K562 (cell line): ENCODE measurements at regions of chr6 and their contacts with region 1.

Region 1: DNA sequence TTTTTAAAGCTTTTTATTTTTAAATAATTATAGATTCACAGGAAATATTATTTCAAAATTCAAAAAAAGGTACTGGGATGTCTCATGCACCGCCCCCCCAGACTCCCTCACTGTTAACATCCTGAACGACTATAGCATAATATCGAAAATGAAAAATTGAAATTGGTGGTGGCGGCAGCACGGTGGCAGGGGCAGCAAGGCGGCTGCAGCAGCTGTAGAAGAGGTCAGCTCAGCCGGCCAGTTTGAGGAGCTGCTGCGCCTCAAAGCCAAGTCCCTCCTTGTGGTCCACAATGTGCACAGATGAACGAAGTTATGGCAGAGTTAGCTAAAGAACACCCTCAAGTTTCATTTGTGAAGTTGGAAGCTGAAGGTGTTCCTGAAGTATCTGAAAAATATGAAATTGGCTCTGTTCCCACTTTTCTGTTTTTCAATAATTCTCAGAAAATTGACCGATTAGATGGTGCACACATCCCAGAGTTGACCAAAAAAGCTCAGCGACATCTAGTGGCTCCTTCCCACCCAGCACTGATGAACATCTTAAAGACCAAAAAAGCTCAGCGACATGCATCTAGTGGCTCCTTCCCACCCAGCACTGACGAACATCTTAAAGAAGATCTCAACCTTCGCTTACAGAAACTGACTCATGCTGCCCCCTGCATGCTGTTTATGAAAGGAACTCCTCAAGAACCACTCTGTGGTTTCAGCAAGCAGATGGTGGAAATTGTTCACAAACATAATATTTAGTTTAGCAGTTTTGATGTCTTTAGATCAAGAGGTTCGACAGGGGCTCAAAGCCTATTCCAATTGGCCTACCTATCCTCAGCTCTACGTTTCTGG is 100.8 kb downstream of the FAM217A start:
- DNase-seq: peak; percentile 46 to 74 (median 50)
- ATAC-seq: peak; percentile 100
- H3K4me3 ChIP-seq: no peak overlapping the region
- H3K27ac ChIP-seq: no peak overlapping the region
- H3K4me1 ChIP-seq: no peaks in the 10 kb centered on the region
- H3K27me3 ChIP-seq: peaks cover 14 to 19% of the 10 kb centered on the region in 2 experiments
- CTCF ChIP-seq: peak; percentile 72 to 88 (median 83)
- EP300 ChIP-seq: no peak
- POLR2A ChIP-seq: no peak
- RAD21 ChIP-seq: peak; percentile 61 to 82

Region 2: DNA sequence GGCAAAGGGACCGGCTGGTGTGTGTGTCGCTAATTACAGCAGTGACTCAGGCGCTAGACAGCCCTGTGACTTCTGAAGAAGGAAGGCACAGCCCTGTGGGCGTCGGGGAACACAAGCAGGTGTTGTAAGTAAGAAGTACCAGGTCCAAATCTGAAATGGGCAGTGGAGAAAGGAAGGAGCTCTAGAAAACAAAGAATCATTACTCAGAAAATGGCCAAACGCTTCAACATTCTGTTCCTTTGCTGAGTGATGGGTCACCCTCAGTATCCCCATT is 333.4 kb before region 1 on chr6:
- CTCF ChIA-PET with region 1: no interaction called
- POLR2A ChIA-PET with region 1: no interaction called
- in situ Hi-C with region 1: no loop called
- intact Hi-C with region 1: no loop called
- DNase-seq: peak in 1 of 4 experiments; percentile 45
- ATAC-seq: peak; percentile 80
- H3K4me3 ChIP-seq: no peak overlapping the region
- H3K27ac ChIP-seq: no peak overlapping the region
- H3K4me1 ChIP-seq: peaks cover 0 to under 1% of the 10 kb centered on the region in 2 experiments; a peak in 2 of 5 replicates
- H3K27me3 ChIP-seq: peaks cover 0 to 2% of the 10 kb centered on the region in 2 experiments; a peak in 2 of 5 replicates
- CTCF ChIP-seq: no peak
- EP300 ChIP-seq: no peak
- POLR2A ChIP-seq: no peak
- RAD21 ChIP-seq: no peak

Region 3: GRCh38 chr6:3887150-3887700 is 90.9 kb before region 1 on chr6:
- CTCF ChIA-PET with region 1: no interaction called
- POLR2A ChIA-PET with region 1: no interaction called
- in situ Hi-C with region 1: no loop called
- intact Hi-C with region 1: loop called (anchors 10 kb)
- DNase-seq: no peak
- ATAC-seq: no peak
- H3K4me3 ChIP-seq: no peak overlapping the region
- H3K27ac ChIP-seq: no peak overlapping the region
- H3K4me1 ChIP-seq: no peaks in the 10 kb centered on the region
- H3K27me3 ChIP-seq: peaks cover 17 to 46% of the 10 kb centered on the region in 2 experiments
- CTCF ChIP-seq: peak; percentile 10 to 36 (median 23); a peak in 1 of 6 replicates
- EP300 ChIP-seq: no peak
- POLR2A ChIP-seq: no peak
- RAD21 ChIP-seq: peak in 1 of 2 experiments; percentile 28; a peak in 2 of 4 replicates

Region 4: GRCh38 chr6:3929281-3929798 is 48.8 kb before region 1 on chr6:
- CTCF ChIA-PET with region 1: interaction called, 4 read pairs
- POLR2A ChIA-PET with region 1: no interaction called
- in situ Hi-C with region 1: no loop called
- intact Hi-C with region 1: loop called (anchors 5 kb)
- DNase-seq: no peak
- ATAC-seq: no peak
- H3K4me3 ChIP-seq: no peak overlapping the region
- H3K27ac ChIP-seq: no peak overlapping the region
- H3K4me1 ChIP-seq: peaks cover 0 to 1% of the 10 kb centered on the region in 2 experiments; a peak in 1 of 5 replicates
- H3K27me3 ChIP-seq: peaks cover 2 to 7% of the 10 kb centered on the region in 2 experiments; a peak in 4 of 5 replicates
- CTCF ChIP-seq: no peak
- EP300 ChIP-seq: no peak
- POLR2A ChIP-seq: no peak
- RAD21 ChIP-seq: no peak

Region 5: GRCh38 chr6:4012826-4013225 is 34.7 kb after region 1 on chr6:
- CTCF ChIA-PET with region 1: no interaction called
- POLR2A ChIA-PET with region 1: no interaction called
- in situ Hi-C with region 1: no loop called
- intact Hi-C with region 1: no loop called
- DNase-seq: no peak
- ATAC-seq: no peak
- H3K4me3 ChIP-seq: no peak overlapping the region
- H3K27ac ChIP-seq: no peak overlapping the region
- H3K4me1 ChIP-seq: peaks cover 4 to 16% of the 10 kb centered on the region in 2 experiments
- H3K27me3 ChIP-seq: no peaks in the 10 kb centered on the region
- CTCF ChIP-seq: no peak
- EP300 ChIP-seq: no peak
- POLR2A ChIP-seq: no peak
- RAD21 ChIP-seq: no peak

Region 6: DNA sequence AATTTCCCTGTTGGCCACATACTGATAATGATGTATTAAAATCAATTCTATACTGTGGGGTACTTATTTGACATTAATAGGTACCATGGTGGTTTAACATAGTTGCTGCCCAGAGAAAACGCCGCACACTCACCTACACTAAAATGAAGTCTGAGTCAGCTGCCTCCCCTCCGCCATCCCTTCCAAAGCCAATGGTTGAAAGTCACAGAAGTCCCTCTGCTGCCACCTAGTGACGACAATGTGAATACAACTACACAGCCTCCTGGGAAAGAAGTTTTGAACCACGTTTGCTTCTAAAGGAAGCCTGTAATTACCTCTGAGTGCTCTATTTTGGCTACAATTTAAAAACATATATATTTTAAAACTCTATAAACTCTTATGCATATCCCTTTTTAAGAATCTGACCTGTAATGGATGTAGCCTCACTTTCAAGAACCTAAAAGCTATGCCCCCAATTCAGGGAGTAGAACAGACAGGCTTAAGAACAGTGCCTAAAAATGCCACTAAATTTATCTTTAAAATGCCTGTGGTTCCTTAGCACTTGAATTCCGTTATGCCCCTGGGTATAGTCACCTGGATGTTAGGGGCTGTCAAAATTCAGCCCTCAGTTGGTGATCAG is 177.9 kb after region 1 on chr6:
- CTCF ChIA-PET with region 1: no interaction called
- POLR2A ChIA-PET with region 1: no interaction called
- in situ Hi-C with region 1: no loop called
- intact Hi-C with region 1: loop called (anchors 5 kb)
- DNase-seq: peak; percentile 82 to 92 (median 85)
- ATAC-seq: peak; percentile 96
- H3K4me3 ChIP-seq: no peak overlapping the region
- H3K27ac ChIP-seq: no peak overlapping the region
- H3K4me1 ChIP-seq: peaks cover 0 to 2% of the 10 kb centered on the region in 2 experiments; a peak in 1 of 5 replicates
- H3K27me3 ChIP-seq: peaks cover 22 to 41% of the 10 kb centered on the region in 2 experiments; a peak in 4 of 5 replicates
- CTCF ChIP-seq: peak; percentile 86 to 94 (median 90)
- EP300 ChIP-seq: no peak
- POLR2A ChIP-seq: no peak
- RAD21 ChIP-seq: peak; percentile 91 to 95